Right cardiac atrium (tissue), 5 donors: ENCODE measurements at regions of chr13 and their contacts with region 1.

Region 1: GRCh38 chr13:95834134-95834765 is 157.3 kb downstream of the DNAJC3 start:
- DNase-seq: peak; percentile 51 to 69 (median 61)
- ATAC-seq: peak; percentile 59 to 75
- H3K4me3 ChIP-seq: no peak overlapping the region
- H3K27ac ChIP-seq: no peak overlapping the region
- H3K4me1 ChIP-seq: no peaks in the 10 kb centered on the region
- H3K27me3 ChIP-seq: no peaks in the 10 kb centered on the region

Region 2: GRCh38 chr13:95536632-95537241 is 297.5 kb before region 1 on chr13:
- intact Hi-C with region 1: loop called in 1 of 4 experiments (anchors 5 kb)
- DNase-seq: no peak
- ATAC-seq: no peak
- H3K4me3 ChIP-seq: no peak overlapping the region
- H3K27ac ChIP-seq: no peak overlapping the region
- H3K4me1 ChIP-seq: no peaks in the 10 kb centered on the region
- H3K27me3 ChIP-seq: no peaks in the 10 kb centered on the region

Region 3: DNA sequence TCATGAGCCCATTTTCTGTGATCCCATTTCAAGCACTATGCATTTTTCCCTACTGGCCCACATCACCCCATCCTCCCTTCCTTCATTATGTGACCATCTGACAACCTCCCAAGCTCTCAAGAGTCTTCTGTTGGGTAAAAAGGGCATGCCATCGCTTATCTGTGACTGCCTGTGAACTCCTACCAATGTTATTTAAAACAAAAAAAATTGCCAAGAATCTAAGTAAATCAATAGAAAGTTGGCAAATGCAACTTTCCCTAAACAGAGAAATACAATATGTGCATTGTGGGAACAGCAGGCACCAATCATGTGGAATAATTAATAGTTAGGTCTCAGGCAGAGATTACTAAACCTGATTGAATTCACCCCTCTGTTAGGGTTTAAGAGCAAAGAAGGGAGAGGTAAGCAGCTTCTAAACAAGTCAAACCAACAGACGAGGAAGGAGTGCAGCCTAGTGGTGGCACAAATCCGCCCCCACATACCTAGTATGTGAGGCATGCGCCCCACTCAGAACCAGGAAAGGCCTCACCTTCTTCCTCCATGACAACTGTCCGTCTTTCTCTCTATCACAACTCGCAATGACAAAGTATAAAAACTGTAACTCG is 219.5 kb before region 1 on chr13:
- intact Hi-C with region 1: loop called in 1 of 4 experiments (anchors 5 kb)
- DNase-seq: no peak
- ATAC-seq: no peak
- H3K4me3 ChIP-seq: no peak overlapping the region
- H3K27ac ChIP-seq: no peak overlapping the region
- H3K4me1 ChIP-seq: no peaks in the 10 kb centered on the region
- H3K27me3 ChIP-seq: no peaks in the 10 kb centered on the region

Region 4: GRCh38 chr13:95624020-95624419 is 210.2 kb before region 1 on chr13:
- intact Hi-C with region 1: loop called (anchors 5 to 10 kb)
- DNase-seq: no peak
- ATAC-seq: peak; percentile 34 to 64
- H3K4me3 ChIP-seq: no peak overlapping the region
- H3K27ac ChIP-seq: no peak overlapping the region
- H3K4me1 ChIP-seq: no peaks in the 10 kb centered on the region
- H3K27me3 ChIP-seq: no peaks in the 10 kb centered on the region